Gastrocnemius medialis (tissue), 4 donors: ENCODE measurements at regions of chr22 and their contacts with region 1.

Region 1: DNA sequence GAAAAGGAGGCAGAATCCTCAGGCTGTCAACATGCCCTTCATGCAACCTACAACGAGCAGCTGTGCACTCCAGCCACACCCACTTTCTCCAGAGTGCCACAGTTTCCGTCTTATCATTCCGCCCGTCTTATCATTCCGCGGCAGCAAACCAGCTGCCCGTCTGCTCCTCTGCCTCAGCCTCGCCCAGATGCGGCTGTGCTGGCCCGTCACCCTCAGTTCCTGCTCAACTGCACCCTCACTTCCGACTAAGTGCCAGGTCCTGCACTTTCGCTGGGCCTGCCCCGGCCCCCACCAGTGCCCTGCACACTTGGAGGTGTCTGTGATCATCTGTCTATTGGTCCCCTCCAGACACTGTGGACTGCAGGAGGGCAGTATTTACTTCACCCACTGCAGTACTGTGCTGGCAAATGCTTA is 43.7 kb downstream of the MICAL3 start:
- DNase-seq: peak in 1 of 2 donors; percentile 37
- ATAC-seq: peak; percentile 76 to 87
- H3K4me3 ChIP-seq: peak overlapping the region in 2 of 4 donors; percentile 3 to 34
- H3K27ac ChIP-seq: peak overlapping the region in 3 of 4 donors; percentile 38 to 53 (median 49)
- H3K4me1 ChIP-seq: peaks cover 22 to 26% of the 10 kb centered on the region in 2 donors
- H3K27me3 ChIP-seq: no peaks in the 10 kb centered on the region
- CTCF ChIP-seq: no peak
- POLR2A ChIP-seq: no peak

Region 2: GRCh38 chr22:17903564-17904295 is 76.9 kb before region 1 on chr22:
- in situ Hi-C with region 1: loop called in 1 of 4 experiments (anchors 10 kb)
- intact Hi-C with region 1: no loop called
- DNase-seq: no peak
- ATAC-seq: peak; percentile 13 to 29
- H3K4me3 ChIP-seq: no peak overlapping the region
- H3K27ac ChIP-seq: peak overlapping the region; percentile 35 to 93 (median 44)
- H3K4me1 ChIP-seq: peaks cover 27 to 46% of the 10 kb centered on the region in 2 donors
- H3K27me3 ChIP-seq: no peaks in the 10 kb centered on the region
- CTCF ChIP-seq: no peak
- POLR2A ChIP-seq: no peak

Region 3: DNA sequence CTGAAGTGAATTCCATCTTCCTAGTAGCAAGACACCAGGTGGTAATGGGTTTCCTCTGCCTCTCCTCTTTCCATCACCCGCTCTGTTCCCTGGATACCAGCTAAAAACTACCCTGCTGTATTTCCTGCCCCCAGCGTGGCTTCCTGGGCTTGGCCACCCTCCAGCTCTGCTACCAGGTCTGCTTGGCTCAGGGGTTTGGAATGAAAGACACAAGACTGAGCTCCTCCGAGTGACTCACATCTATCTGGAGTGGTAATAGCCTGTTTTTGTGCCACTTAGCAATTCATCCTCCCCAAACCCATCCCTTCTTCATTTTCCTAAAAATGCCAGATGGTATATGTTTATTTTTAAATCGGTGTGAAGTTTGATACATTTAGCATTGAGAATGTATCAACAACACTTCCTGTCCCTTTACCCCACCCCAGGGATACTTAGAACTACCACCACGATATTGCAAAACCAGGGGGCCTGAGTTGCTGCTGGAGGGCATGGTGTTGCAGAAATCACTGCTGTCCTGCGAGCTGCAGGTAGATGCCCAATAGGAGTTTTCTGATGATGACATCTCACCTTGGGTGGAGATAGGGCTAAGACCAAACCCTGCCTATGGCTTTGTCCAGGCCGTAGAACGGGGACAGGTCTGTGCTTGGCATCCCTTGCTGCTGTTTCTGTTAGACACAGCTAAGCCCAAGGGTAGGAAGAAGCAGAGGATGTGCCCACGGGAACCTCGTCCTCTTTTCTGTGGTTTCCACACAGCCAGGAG is 51.2 kb after region 1 on chr22:
- in situ Hi-C with region 1: no loop called
- intact Hi-C with region 1: no loop called
- DNase-seq: peak; percentile 62 to 69
- ATAC-seq: peak; percentile 21 to 58
- H3K4me3 ChIP-seq: no peak overlapping the region
- H3K27ac ChIP-seq: peak overlapping the region; percentile 83 to 94 (median 90)
- H3K4me1 ChIP-seq: peaks cover 61 to 63% of the 10 kb centered on the region in 2 donors
- H3K27me3 ChIP-seq: no peaks in the 10 kb centered on the region
- CTCF ChIP-seq: no peak
- POLR2A ChIP-seq: no peak